CD4-positive, alpha-beta T cell (primary cell): ENCODE measurements at regions of chr9 and their contacts with region 1.

Region 1: DNA sequence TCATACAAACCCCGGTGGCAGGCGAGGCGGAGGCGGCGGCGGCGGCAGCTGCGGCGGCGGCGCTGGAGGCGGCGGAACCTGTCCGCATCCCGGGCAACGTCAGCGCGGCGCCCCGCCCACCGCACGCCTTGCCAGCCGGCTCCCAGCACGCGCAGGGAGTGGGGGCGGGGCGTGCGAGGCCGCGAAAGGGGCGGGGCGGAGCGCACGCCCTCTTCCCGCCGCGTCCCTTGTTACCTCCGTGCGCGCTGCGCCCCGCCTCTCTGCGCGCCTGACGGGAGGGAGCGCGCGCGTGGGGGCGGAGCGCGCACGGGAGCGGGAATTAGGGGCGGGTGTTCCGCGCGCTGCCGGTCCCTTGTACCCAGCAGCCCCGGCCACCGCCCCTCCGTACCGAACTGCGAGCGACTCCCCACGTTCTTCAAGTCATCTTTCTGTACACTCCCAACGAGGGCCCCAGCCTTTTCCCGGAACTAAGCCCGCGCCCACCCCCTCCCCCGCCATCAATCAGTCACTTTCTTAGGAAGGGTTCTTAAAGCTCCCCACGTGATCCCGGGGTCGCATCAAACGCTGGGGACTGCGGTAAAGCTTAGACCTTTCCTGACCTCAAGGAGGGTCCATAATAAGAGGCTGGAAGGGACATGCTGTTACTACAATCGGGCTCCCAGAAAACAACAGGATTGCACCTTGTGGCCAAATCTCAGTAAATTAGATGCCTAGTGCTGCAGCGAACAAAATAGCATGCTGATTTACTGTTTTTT is at the start of gene AGTPBP1:
- DNase-seq: peak; percentile 92 to 100 (median 98)
- ATAC-seq: peak; percentile 81
- H3K4me3 ChIP-seq: peak within 1 kb of the TSS; percentile 89
- H3K4me3 Mint-ChIP-seq: peak within 1 kb of the TSS; percentile 97
- H3K27ac ChIP-seq: peak within 1 kb of the TSS; percentile 80 to 97
- H3K27ac Mint-ChIP-seq: peak within 1 kb of the TSS; percentile 93
- H3K4me1 ChIP-seq: peaks cover 18% of the 10 kb centered on the region
- H3K4me1 Mint-ChIP-seq: peaks cover 35% of the 10 kb centered on the region
- H3K27me3 ChIP-seq: no peaks in the 10 kb centered on the region
- H3K27me3 Mint-ChIP-seq: no peaks in the 10 kb centered on the region
- CTCF ChIP-seq: no peak
- total RNA-seq, gene AGTPBP1: 52.0 to 55.2 TPM

Region 2: DNA sequence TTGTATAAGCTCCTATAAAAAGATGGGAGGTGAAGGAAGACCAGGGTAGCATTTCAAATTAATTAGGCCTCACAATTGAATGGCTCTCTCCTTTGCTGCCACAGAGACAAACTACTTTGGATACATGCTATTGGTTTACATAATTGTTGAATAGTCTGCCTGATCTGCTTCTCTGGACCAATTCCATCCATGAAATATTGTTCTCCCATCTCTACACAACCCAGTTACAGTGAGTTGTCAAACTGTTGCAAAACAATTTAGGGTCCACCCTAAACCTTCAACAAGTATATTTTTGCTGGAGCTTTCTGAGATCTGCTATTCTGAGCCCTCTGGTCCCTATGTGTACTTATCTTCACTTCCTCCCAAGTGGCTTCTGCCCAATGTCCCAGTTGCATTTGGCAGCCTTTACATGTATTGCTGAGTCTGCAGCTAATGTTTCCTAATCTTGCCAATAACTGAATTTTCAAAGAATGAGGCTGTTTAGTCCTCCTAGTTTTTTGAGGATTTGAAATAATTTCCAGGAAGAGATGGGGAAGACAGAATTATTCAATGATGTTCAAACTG is 39.2 kb before region 1 on chr9:
- CTCF ChIA-PET with region 1: interaction called, 15 read pairs
- POLR2A ChIA-PET with region 1: interaction called, 14 read pairs
- intact Hi-C with region 1: loop called (anchors 1 to 5 kb)
- DNase-seq: no peak
- ATAC-seq: no peak
- H3K4me3 ChIP-seq: no peak overlapping the region
- H3K4me3 Mint-ChIP-seq: no peak overlapping the region
- H3K27ac ChIP-seq: no peak overlapping the region
- H3K27ac Mint-ChIP-seq: peak overlapping the region; percentile 3
- H3K4me1 ChIP-seq: no peaks in the 10 kb centered on the region
- H3K4me1 Mint-ChIP-seq: peaks cover 56% of the 10 kb centered on the region
- H3K27me3 ChIP-seq: no peaks in the 10 kb centered on the region
- H3K27me3 Mint-ChIP-seq: no peaks in the 10 kb centered on the region
- CTCF ChIP-seq: no peak

Region 3: GRCh38 chr9:85716031-85716877 is 25.8 kb before region 1 on chr9:
- CTCF ChIA-PET with region 1: no interaction called
- POLR2A ChIA-PET with region 1: interaction called, 13 read pairs
- intact Hi-C with region 1: no loop called
- DNase-seq: peak in 2 of 14 experiments; percentile 16 to 29
- ATAC-seq: no peak
- H3K4me3 ChIP-seq: no peak overlapping the region
- H3K4me3 Mint-ChIP-seq: no peak overlapping the region
- H3K27ac ChIP-seq: peak overlapping the region in 1 of 2 donors; percentile 4
- H3K27ac Mint-ChIP-seq: peak overlapping the region; percentile 16
- H3K4me1 ChIP-seq: no peaks in the 10 kb centered on the region
- H3K4me1 Mint-ChIP-seq: peaks cover 59% of the 10 kb centered on the region
- H3K27me3 ChIP-seq: no peaks in the 10 kb centered on the region
- H3K27me3 Mint-ChIP-seq: no peaks in the 10 kb centered on the region
- CTCF ChIP-seq: no peak

Region 4: DNA sequence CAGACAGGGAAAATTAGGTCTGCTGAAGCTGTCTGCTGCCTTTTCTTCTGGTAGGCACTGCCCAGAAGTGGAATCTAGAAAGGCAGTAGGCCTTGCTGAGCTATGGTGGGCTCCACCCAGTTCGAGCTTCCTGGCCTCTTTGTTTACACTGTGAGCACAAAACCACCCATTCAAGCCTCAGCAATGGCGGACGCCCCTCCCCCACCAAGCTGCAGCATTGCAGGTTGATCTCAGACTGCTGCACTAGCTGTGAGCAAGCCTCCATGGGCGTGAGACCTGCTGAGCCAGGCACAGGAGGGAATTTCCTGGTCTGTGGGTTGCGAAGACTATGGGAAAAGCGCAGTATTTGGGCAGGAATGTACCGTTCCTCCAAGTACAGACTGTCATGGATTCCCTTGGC is 18.8 kb before region 1 on chr9:
- CTCF ChIA-PET with region 1: interaction called, 3 read pairs
- POLR2A ChIA-PET with region 1: interaction called, 65 read pairs
- intact Hi-C with region 1: loop called in 1 of 2 experiments (anchors 2 kb)
- DNase-seq: peak; percentile 41 to 86 (median 70)
- ATAC-seq: peak; percentile 88
- H3K4me3 ChIP-seq: no peak overlapping the region
- H3K4me3 Mint-ChIP-seq: peak overlapping the region; percentile 76
- H3K27ac ChIP-seq: peak overlapping the region in 1 of 2 donors; percentile 45
- H3K27ac Mint-ChIP-seq: peak overlapping the region; percentile 94
- H3K4me1 ChIP-seq: peaks cover 16% of the 10 kb centered on the region
- H3K4me1 Mint-ChIP-seq: peaks cover 83% of the 10 kb centered on the region
- H3K27me3 ChIP-seq: no peaks in the 10 kb centered on the region
- H3K27me3 Mint-ChIP-seq: no peaks in the 10 kb centered on the region
- CTCF ChIP-seq: no peak

Region 5: DNA sequence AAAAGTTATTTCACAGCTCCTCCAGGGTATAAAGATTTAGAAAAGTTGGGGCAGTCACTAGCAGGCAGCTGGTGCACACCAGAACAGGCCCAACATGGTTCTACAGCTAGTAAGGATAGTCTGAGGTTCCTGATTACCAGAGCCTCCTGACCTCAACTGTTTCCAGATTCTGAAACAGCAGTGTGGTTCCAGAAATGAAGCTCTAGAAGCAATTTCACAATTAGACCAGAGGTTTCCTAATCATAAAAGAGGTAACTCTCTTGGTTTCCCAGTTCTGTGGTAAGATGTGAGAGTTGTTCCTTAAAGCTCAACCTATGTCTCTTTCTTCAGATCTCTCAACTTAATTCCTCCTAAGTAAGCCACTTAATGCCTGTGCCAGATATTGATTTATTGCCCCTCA is 12.2 kb before region 1 on chr9:
- CTCF ChIA-PET with region 1: interaction called, 3 read pairs
- POLR2A ChIA-PET with region 1: interaction called, 65 read pairs
- intact Hi-C with region 1: no loop called
- DNase-seq: peak in 3 of 14 experiments; percentile 28 to 32 (median 30)
- ATAC-seq: no peak
- H3K4me3 ChIP-seq: no peak overlapping the region
- H3K4me3 Mint-ChIP-seq: no peak overlapping the region
- H3K27ac ChIP-seq: no peak overlapping the region
- H3K27ac Mint-ChIP-seq: peak overlapping the region; percentile 18
- H3K4me1 ChIP-seq: peaks cover 3% of the 10 kb centered on the region
- H3K4me1 Mint-ChIP-seq: peaks cover 81% of the 10 kb centered on the region
- H3K27me3 ChIP-seq: no peaks in the 10 kb centered on the region
- H3K27me3 Mint-ChIP-seq: no peaks in the 10 kb centered on the region
- CTCF ChIP-seq: no peak

Region 6: DNA sequence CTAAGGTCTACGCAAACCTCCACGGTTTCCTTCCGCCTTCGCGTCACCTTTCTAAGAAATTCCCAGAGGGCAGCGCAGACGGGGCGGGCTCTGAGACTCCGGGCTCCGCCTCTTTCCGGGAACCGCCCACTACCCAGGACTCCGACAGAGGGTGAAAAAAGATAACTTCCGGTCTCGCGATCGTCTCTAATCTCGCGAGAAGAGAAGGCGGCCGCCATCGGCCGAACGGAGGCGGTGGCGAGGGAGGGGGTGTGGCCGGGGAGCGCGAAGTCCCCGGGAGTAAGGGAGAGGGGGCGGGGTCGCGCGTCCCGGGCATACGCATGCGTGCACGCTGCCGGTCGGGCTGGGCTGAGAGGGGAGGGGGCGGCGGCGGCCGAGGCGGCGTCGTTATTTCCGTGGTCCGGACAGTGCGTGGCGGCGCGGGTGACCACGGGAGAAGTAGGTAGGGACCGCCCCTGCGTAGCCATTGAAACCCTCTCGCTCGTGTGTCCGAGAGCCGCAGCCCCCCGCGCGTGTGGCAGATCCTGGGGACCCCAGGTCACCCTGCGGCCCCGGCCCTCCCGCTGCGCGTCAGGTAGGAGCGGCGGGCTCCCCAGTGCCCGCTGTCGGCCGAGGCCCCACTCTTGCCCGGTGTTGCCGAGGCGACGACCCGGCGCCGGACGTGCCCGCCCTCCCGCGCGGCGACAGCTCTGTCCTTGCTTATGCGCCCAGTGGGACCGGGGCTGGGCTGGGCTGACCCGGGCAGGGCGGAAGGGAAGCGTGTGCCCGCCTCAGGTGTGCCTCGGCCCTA is 199.0 kb after region 1 on chr9 and contains the start of gene NAA35:
- CTCF ChIA-PET with region 1: no interaction called
- POLR2A ChIA-PET with region 1: no interaction called
- intact Hi-C with region 1: loop called (anchors 2 to 5 kb)
- DNase-seq: peak; percentile 98 to 100 (median 99)
- ATAC-seq: peak; percentile 85
- H3K4me3 ChIP-seq: peak within 1 kb of the TSS; percentile 81
- H3K4me3 Mint-ChIP-seq: peak within 1 kb of the TSS; percentile 94
- H3K27ac ChIP-seq: peak within 1 kb of the TSS; percentile 80 to 82
- H3K27ac Mint-ChIP-seq: no peak within 1 kb of the TSS
- H3K4me1 ChIP-seq: peaks cover 24% of the 10 kb centered on the region
- H3K4me1 Mint-ChIP-seq: peaks cover 9% of the 10 kb centered on the region
- H3K27me3 ChIP-seq: no peaks in the 10 kb centered on the region
- H3K27me3 Mint-ChIP-seq: no peaks in the 10 kb centered on the region
- CTCF ChIP-seq: no peak
- total RNA-seq, gene NAA35: 19.4 to 19.8 TPM

Region 7: DNA sequence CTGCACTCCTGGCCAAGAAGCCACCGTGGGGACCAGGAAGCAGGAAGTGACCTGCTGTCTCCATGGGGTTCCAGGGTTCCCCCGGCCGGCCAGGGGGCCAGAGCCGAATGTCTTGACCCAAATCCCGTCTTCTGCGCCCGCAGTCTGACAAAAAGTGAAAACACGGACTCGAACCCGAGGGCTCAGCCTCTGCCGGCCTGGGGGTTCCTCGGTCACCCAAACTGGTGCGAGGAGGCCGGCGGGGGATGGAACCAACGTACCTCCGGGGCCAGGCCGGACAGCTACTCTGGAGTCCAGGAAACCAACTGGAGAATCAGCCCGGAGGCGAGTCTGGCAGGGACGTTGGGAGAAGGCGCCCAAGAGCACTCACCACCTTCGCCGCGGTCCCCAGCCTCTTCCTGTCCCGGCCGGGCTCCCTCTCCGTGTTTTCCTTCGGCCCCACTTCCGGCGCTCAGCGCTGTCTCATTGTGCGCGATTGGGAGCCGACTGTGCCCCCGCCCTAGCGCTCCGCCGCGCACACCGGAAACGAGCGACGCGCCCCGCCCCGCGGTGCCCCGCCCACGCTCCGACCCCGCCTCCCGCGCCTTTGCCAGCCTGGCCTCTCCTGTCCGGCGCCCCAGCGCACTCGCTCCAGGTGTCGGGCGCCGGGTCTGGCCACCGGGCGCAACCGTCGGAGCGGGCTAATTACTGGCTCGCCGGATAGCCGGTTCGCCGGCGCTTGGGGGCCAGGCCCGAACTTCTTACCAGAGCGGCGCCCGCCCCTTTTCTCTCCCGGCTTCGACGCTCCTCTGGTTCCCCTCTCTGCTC is 612.2 kb after region 1 on chr9 and contains the start of gene TUT7:
- CTCF ChIA-PET with region 1: no interaction called
- POLR2A ChIA-PET with region 1: no interaction called
- intact Hi-C with region 1: loop called in 1 of 2 experiments (anchors 2 kb)
- DNase-seq: peak; percentile 81 to 96 (median 92)
- ATAC-seq: peak; percentile 91
- H3K4me3 ChIP-seq: peak within 1 kb of the TSS; percentile 96
- H3K4me3 Mint-ChIP-seq: peak within 1 kb of the TSS; percentile 99
- H3K27ac ChIP-seq: peak within 1 kb of the TSS; percentile 75 to 82
- H3K27ac Mint-ChIP-seq: peak within 1 kb of the TSS; percentile 83
- H3K4me1 ChIP-seq: peaks cover 26% of the 10 kb centered on the region
- H3K4me1 Mint-ChIP-seq: peaks cover 51% of the 10 kb centered on the region
- H3K27me3 ChIP-seq: no peaks in the 10 kb centered on the region
- H3K27me3 Mint-ChIP-seq: no peaks in the 10 kb centered on the region
- CTCF ChIP-seq: no peak
- total RNA-seq, gene TUT7: 51.9 to 53.8 TPM